ENCODE measurements at regions of chr14 and their contacts with region 1.

Region 1: GRCh38 chr14:22570132-22570949 is 18.7 kb downstream of the DAD1 start:
- DNase-seq: peak; percentile 94
- H3K4me3 ChIP-seq: no peak overlapping the region
- H3K27ac ChIP-seq: peak overlapping the region; percentile 45
- H3K4me1 ChIP-seq: peaks cover 20% of the 10 kb centered on the region
- H3K27me3 ChIP-seq: no peaks in the 10 kb centered on the region
- CTCF ChIP-seq: peak; percentile 95

Region 2: DNA sequence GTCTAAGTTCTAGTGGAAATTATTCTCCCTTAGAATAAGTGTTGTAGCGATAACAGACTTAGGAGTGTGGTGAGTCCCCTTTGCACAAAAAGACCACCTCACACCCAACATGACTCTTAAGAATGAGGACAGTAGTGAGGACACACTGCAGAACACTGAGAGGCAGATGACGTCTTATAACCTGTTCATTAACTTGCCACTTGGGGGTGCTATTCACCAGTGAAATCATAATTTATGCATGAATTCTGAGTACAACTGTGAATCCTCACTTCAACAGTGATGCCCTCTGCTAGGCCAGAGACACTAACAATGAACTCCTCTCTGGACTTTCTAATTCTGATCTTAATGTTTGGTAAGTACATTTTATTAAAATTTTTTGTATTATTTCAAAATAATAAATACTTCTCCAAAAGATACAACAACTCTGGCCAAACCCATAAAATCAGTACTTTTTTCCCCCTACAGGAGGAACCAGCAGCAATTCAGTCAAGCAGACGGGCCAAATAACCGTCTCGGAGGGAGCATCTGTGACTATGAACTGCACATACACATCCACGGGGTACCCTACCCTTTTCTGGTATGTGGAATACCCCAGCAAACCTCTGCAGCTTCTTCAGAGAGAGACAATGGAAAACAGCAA is 256.0 kb before region 1 on chr14:
- CTCF ChIA-PET with region 1: interaction called, 4 read pairs
- POLR2A ChIA-PET with region 1: no interaction called
- intact Hi-C with region 1: loop called (anchors 5 kb)
- DNase-seq: peak; percentile 88
- H3K4me3 ChIP-seq: no peak overlapping the region
- H3K27ac ChIP-seq: peak overlapping the region; percentile 2
- H3K4me1 ChIP-seq: no peaks in the 10 kb centered on the region
- H3K27me3 ChIP-seq: no peaks in the 10 kb centered on the region
- CTCF ChIP-seq: peak; percentile 84

Region 3: GRCh38 chr14:22556990-22557623 is 13.2 kb before region 1 on chr14:
- CTCF ChIA-PET with region 1: interaction called, 28 read pairs
- POLR2A ChIA-PET with region 1: no interaction called
- intact Hi-C with region 1: no loop called
- DNase-seq: peak; percentile 88
- H3K4me3 ChIP-seq: peak overlapping the region; percentile 27
- H3K27ac ChIP-seq: peak overlapping the region; percentile 72
- H3K4me1 ChIP-seq: peaks cover 63% of the 10 kb centered on the region
- H3K27me3 ChIP-seq: no peaks in the 10 kb centered on the region
- CTCF ChIP-seq: peak; percentile 100

Region 4: GRCh38 chr14:22766456-22767322 is 196.3 kb after region 1 on chr14 and contains the start of gene OXA1L:
- CTCF ChIA-PET with region 1: interaction called, 3 read pairs
- POLR2A ChIA-PET with region 1: no interaction called
- intact Hi-C with region 1: loop called (anchors 10 kb)
- DNase-seq: peak; percentile 98
- H3K4me3 ChIP-seq: peak within 1 kb of the TSS; percentile 71
- H3K27ac ChIP-seq: peak within 1 kb of the TSS; percentile 84
- H3K4me1 ChIP-seq: peaks cover 12% of the 10 kb centered on the region
- H3K27me3 ChIP-seq: no peaks in the 10 kb centered on the region
- CTCF ChIP-seq: no peak
- total RNA-seq, gene OXA1L: 103 and 107 TPM in 2 replicates

Region 5: GRCh38 chr14:22852940-22853767 is 282.8 kb after region 1 on chr14:
- CTCF ChIA-PET with region 1: interaction called, 8 read pairs
- POLR2A ChIA-PET with region 1: no interaction called
- intact Hi-C with region 1: loop called (anchors 1 kb)
- DNase-seq: peak; percentile 93
- H3K4me3 ChIP-seq: peak overlapping the region; percentile 43
- H3K27ac ChIP-seq: peak overlapping the region; percentile 72
- H3K4me1 ChIP-seq: peaks cover 18% of the 10 kb centered on the region
- H3K27me3 ChIP-seq: no peaks in the 10 kb centered on the region
- CTCF ChIP-seq: peak; percentile 92

Region 6: GRCh38 chr14:22986508-22987054 is 416.2 kb after region 1 on chr14:
- CTCF ChIA-PET with region 1: no interaction called
- POLR2A ChIA-PET with region 1: no interaction called
- intact Hi-C with region 1: loop called (anchors 5 kb)
- DNase-seq: peak; percentile 87
- H3K4me3 ChIP-seq: no peak overlapping the region
- H3K27ac ChIP-seq: no peak overlapping the region
- H3K4me1 ChIP-seq: no peaks in the 10 kb centered on the region
- H3K27me3 ChIP-seq: no peaks in the 10 kb centered on the region
- CTCF ChIP-seq: peak; percentile 91